MCF 10A (cell line): ENCODE measurements at regions of chr6 and their contacts with region 1.

Region 1: DNA sequence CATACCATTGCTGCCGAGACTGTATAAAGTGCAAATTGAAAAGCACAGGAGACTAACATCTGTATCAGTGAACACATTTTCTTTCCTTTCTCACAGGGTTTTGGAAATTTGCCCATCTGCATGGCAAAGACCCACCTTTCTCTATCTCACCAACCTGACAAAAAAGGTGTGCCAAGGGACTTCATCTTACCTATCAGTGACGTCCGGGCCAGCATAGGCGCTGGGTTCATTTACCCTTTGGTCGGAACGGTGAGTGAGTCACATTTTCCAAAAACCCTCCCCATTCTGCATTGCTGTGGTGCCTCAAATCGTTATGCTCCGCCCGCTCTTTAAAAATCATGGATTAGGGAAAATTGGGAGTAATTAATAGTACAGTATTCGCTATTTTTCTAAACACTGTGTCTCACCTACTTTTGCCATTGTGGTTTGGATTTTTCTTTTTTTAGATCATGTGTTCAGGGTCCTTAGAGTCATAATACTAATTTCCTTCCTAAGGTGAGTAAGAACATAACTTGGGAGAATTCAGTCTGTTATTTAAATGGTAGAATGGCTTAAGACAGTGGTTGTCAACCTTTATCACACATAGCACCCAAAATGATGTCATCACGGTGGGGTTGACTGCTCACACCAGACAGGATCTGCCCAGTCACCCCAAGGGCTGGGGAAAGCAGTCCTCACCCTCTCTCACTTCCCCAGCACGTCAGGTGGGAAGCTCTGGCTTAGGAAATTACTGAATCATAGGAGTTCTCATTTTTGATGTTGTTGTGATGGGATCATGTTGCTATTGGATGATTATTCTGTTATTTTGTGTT is 171.6 kb downstream of the MTHFD1L start:
- DNase-seq: peak; percentile 21
- H3K4me3 Mint-ChIP-seq: peak overlapping the region; percentile 38
- H3K27ac Mint-ChIP-seq: peak overlapping the region; percentile 84
- H3K4me1 Mint-ChIP-seq: peaks cover 27% of the 10 kb centered on the region
- H3K27me3 Mint-ChIP-seq: no peaks in the 10 kb centered on the region
- CTCF ChIP-seq: no peak

Region 2: DNA sequence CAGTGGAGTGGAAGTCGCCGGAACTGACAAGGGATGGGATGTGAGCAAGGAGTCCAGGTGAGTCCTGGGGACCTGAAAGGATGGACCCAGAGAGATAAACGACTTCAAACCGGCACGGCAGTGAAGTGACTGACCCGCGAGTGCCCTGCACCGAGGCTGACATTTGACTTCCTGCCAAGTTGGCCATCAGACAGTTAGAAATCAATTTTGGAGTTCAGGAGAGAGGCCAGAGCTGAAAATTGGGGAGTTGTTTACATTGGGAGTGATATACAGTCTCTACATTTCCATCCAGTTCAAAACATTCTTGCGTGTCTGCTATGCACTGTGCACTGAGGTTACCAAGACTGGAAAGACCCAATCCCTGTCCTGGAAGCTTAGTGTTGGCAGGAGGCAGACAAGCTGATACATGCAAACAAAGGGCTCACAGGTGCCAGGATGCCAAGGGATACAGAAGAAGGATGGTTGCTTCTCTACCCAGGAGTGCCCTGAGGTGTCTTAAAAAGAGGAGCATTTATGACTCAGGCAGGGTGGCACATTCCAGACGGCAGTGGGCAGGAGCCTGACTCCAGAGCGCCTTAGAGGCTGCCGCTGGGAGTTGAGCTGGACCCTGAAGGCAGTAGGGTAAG is 15.1 kb after region 1 on chr6:
- CTCF ChIA-PET with region 1: interaction called, 18 read pairs
- POLR2A ChIA-PET with region 1: interaction called, 11 read pairs
- intact Hi-C with region 1: no loop called
- DNase-seq: peak; percentile 95
- H3K4me3 Mint-ChIP-seq: no peak overlapping the region
- H3K27ac Mint-ChIP-seq: peak overlapping the region; percentile 73
- H3K4me1 Mint-ChIP-seq: peaks cover 16% of the 10 kb centered on the region
- H3K27me3 Mint-ChIP-seq: no peaks in the 10 kb centered on the region
- CTCF ChIP-seq: no peak

Region 3: GRCh38 chr6:151060096-151060765 is 23.2 kb after region 1 on chr6:
- CTCF ChIA-PET with region 1: no interaction called
- POLR2A ChIA-PET with region 1: interaction called, 6 read pairs
- intact Hi-C with region 1: loop called (anchors 2 kb)
- DNase-seq: peak; percentile 89
- H3K4me3 Mint-ChIP-seq: no peak overlapping the region
- H3K27ac Mint-ChIP-seq: peak overlapping the region; percentile 97
- H3K4me1 Mint-ChIP-seq: peaks cover 25% of the 10 kb centered on the region
- H3K27me3 Mint-ChIP-seq: no peaks in the 10 kb centered on the region
- CTCF ChIP-seq: no peak